ENCODE measurements at regions of chr14 and their contacts with region 1.

Region 1: DNA sequence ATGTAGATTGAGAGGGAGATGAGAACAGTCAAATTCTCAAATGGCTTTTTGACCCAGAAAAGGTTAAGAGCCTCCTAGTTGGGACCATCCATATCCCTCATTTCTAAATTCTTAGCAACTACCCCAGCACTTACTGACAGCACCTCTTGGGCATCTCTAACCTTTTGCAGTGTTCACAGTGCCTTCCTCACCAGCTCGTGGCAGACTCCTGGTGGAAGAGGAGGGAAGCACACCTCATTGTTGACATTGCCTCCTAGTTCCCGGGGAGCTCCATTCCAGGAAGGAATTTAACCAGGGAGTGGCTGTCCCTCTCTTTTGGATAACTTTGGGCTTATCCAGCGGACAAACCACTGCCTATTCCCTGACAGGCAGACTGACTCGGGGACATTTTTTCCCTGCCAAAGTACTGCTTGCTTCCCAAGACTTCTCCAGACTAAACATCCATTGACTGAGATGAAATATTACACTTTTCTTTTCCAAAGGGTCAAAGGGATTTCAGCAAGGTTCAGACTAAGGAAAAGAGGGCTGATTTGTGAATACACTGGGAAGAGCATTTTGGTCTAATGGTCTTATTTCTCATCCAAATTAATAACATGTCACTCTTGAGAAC is 9.0 kb upstream of the OR6J1 start:
- DNase-seq: peak; percentile 75
- H3K4me3 ChIP-seq: no peak overlapping the region
- H3K27ac ChIP-seq: peak overlapping the region; percentile 29
- H3K4me1 ChIP-seq: peaks cover 19% of the 10 kb centered on the region
- H3K27me3 ChIP-seq: no peaks in the 10 kb centered on the region
- CTCF ChIP-seq: peak; percentile 89 to 95
- POLR2A ChIP-seq: no peak

Region 2: GRCh38 chr14:22472935-22473854 is 179.9 kb before region 1 on chr14:
- CTCF ChIA-PET with region 1: interaction called, 3 read pairs
- POLR2A ChIA-PET with region 1: no interaction called
- dilution Hi-C with region 1: no loop called
- intact Hi-C with region 1: loop called (anchors 5 kb)
- DNase-seq: peak; percentile 72
- H3K4me3 ChIP-seq: no peak overlapping the region
- H3K27ac ChIP-seq: no peak overlapping the region
- H3K4me1 ChIP-seq: peaks cover 20% of the 10 kb centered on the region
- H3K27me3 ChIP-seq: peaks cover 0 to 5% of the 10 kb centered on the region in 2 experiments
- CTCF ChIP-seq: peak; percentile 49 to 52
- POLR2A ChIP-seq: no peak

Region 3: GRCh38 chr14:22598099-22598899 is 54.8 kb before region 1 on chr14 and contains the start of gene ABHD4:
- CTCF ChIA-PET with region 1: interaction called, 45 read pairs
- POLR2A ChIA-PET with region 1: interaction called, 4 read pairs
- dilution Hi-C with region 1: no loop called
- intact Hi-C with region 1: loop called (anchors 1 kb)
- DNase-seq: peak; percentile 79
- H3K4me3 ChIP-seq: peak within 1 kb of the TSS; percentile 56 to 68 (median 62)
- H3K27ac ChIP-seq: peak within 1 kb of the TSS; percentile 53
- H3K4me1 ChIP-seq: peaks cover 14% of the 10 kb centered on the region
- H3K27me3 ChIP-seq: peaks cover 0 to 5% of the 10 kb centered on the region in 2 experiments
- CTCF ChIP-seq: no peak
- POLR2A ChIP-seq: peak; percentile 44
- total RNA-seq, gene ABHD4: 22.4 and 34.8 TPM in 2 replicates

Region 4: DNA sequence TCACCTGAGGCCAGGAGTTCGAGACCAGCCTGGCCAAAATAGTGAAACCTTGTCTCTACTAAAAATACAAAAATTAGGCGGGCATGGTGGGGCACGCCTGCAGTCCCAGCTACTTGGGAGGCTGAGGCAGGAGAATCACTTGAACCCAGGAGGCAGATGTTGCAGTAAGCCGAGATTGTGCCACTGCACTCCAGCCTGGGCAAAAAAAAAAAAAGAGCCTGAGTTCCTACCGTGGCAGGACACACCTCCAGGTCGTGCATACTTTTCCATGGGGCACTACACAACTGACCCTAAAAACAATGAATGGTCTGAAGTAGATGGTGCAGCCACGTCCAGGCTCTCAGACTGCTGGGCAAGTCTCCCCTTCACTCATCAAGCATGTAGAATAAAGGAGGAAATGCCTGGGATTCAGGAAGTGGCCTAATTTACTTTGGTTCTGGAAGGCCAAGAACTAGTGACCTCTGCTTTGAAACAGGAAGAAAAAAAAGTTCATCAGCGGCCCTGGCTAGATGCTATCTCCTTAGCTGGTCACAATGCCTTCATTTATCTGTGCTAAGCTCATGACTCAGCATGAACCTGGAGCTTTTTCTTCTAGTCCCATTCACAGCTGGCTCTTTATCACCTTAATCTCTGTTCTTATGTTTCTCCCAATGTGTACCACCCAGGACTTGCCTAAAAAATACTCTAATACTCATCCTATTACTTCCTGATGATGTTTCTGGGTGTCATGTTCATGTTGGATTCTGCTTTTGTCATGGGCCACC is 46.9 kb after region 1 on chr14:
- CTCF ChIA-PET with region 1: interaction called, 26 read pairs
- POLR2A ChIA-PET with region 1: interaction called, 3 read pairs
- dilution Hi-C with region 1: no loop called
- intact Hi-C with region 1: loop called (anchors 1 kb)
- DNase-seq: peak; percentile 80
- H3K4me3 ChIP-seq: no peak overlapping the region
- H3K27ac ChIP-seq: peak overlapping the region; percentile 57
- H3K4me1 ChIP-seq: peaks cover 23% of the 10 kb centered on the region
- H3K27me3 ChIP-seq: no peaks in the 10 kb centered on the region
- CTCF ChIP-seq: no peak
- POLR2A ChIP-seq: peak; percentile 62

Region 5: DNA sequence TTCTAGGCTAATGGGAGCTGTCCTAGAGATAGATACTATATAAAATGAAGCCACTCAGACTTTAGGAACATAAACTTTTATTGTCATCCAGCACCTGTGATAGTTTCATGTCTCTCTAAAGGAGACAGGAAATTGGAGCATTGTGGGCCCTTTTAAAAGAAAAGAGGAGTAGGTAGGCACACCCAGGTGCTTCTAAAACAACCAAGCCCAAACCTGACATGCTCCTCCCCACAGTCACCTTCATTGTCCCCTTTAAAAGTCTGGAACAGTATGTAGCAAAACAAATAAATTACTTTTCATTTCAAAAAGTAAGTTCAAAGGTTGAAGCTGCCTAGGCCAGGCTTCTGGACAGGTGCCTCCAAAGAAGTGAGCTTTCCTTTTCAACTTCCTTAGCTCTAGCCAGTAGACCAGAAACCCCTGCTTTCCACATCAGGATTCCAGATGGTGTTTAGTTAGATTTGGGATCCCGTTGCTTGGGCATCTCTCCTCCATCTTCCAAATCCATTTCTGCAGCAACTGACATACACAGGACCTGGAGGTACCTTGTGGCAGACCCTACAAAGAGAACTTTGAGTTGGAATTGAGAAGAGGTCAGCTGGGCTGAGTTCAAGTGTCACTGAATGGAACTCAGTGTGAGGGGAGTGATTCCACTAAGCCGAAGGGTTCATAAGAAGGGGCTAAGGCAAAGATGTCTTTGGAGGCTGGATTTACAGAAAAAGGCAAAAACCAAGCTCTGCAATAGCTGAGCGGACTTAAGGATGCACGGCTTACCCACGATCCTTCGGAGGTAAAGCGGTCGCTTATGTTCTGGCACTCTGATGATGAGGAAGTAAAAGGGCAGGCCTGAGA is 120.3 kb after region 1 on chr14:
- CTCF ChIA-PET with region 1: interaction called, 18 read pairs
- POLR2A ChIA-PET with region 1: no interaction called
- dilution Hi-C with region 1: no loop called
- intact Hi-C with region 1: no loop called
- DNase-seq: no peak
- H3K4me3 ChIP-seq: no peak overlapping the region
- H3K27ac ChIP-seq: no peak overlapping the region
- H3K4me1 ChIP-seq: peaks cover 9% of the 10 kb centered on the region
- H3K27me3 ChIP-seq: no peaks in the 10 kb centered on the region
- CTCF ChIP-seq: no peak
- POLR2A ChIP-seq: no peak

Region 6: GRCh38 chr14:22852940-22853767 is 200.0 kb after region 1 on chr14:
- CTCF ChIA-PET with region 1: interaction called, 72 read pairs
- POLR2A ChIA-PET with region 1: no interaction called
- dilution Hi-C with region 1: no loop called
- intact Hi-C with region 1: loop called (anchors 1 kb)
- DNase-seq: peak; percentile 85
- H3K4me3 ChIP-seq: peak overlapping the region in 2 of 3 experiments; percentile 32 to 52
- H3K27ac ChIP-seq: peak overlapping the region; percentile 98
- H3K4me1 ChIP-seq: peaks cover 49% of the 10 kb centered on the region
- H3K27me3 ChIP-seq: no peaks in the 10 kb centered on the region
- CTCF ChIP-seq: peak; percentile 85 to 93
- POLR2A ChIP-seq: no peak

Region 7: GRCh38 chr14:22893706-22894105 is 240.6 kb after region 1 on chr14:
- CTCF ChIA-PET with region 1: no interaction called
- POLR2A ChIA-PET with region 1: no interaction called
- dilution Hi-C with region 1: no loop called
- intact Hi-C with region 1: no loop called
- DNase-seq: no peak
- H3K4me3 ChIP-seq: no peak overlapping the region
- H3K27ac ChIP-seq: no peak overlapping the region
- H3K4me1 ChIP-seq: no peaks in the 10 kb centered on the region
- H3K27me3 ChIP-seq: no peaks in the 10 kb centered on the region
- CTCF ChIP-seq: no peak
- POLR2A ChIP-seq: no peak